ENCODE measurements at regions of chr15 and their contacts with region 1.

Region 1: GRCh38 chr15:56491110-56491722 is 26.3 kb upstream of the MNS1 start:
- DNase-seq: peak in 7 of 9 donors; percentile 24 to 49 (median 40)
- ATAC-seq: peak; percentile 74
- H3K4me3 ChIP-seq: no peak overlapping the region
- H3K4me3 Mint-ChIP-seq: no peak overlapping the region
- H3K27ac ChIP-seq: no peak overlapping the region
- H3K27ac Mint-ChIP-seq: no peak overlapping the region
- H3K4me1 ChIP-seq: no peaks in the 10 kb centered on the region
- H3K4me1 Mint-ChIP-seq: peaks cover 0 to 8% (median 0%) of the 10 kb centered on the region in 7 donors
- H3K27me3 ChIP-seq: no peaks in the 10 kb centered on the region
- H3K27me3 Mint-ChIP-seq: peaks cover 0 to 15% (median 6%) of the 10 kb centered on the region in 5 donors

Region 2: GRCh38 chr15:57146506-57147201 is 655.4 kb after region 1 on chr15:
- CTCF ChIA-PET with region 1: no interaction called
- POLR2A ChIA-PET with region 1: no interaction called
- intact Hi-C with region 1: loop called in 1 of 2 experiments (anchors 10 kb)
- DNase-seq: peak in 5 of 9 donors; percentile 14 to 35 (median 16)
- ATAC-seq: no peak
- H3K4me3 ChIP-seq: no peak overlapping the region
- H3K4me3 Mint-ChIP-seq: no peak overlapping the region
- H3K27ac ChIP-seq: no peak overlapping the region
- H3K27ac Mint-ChIP-seq: peak overlapping the region in 1 of 9 donors; percentile 14
- H3K4me1 ChIP-seq: no peaks in the 10 kb centered on the region
- H3K4me1 Mint-ChIP-seq: peaks cover 6 to 18% (median 12%) of the 10 kb centered on the region in 7 donors
- H3K27me3 ChIP-seq: no peaks in the 10 kb centered on the region
- H3K27me3 Mint-ChIP-seq: no peaks in the 10 kb centered on the region

Region 3: DNA sequence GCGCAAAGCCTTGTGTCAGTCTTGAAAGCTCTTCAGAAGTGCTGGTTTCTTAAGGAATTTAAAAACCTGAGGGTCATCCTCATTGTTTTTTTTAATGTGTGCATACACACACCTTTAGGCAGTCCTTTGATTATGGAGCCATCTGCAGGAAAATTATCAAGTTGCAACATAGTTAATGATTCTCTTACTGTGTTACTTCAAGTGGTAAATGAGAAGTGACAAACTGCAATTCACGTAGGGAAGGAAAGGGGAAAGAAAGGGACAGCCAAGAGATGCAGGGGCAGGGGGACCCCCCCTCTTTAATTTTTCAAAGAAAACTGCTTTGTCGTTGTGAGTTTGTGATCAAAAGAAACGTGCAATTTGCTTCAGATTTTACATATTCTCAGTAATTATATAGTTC is 722.6 kb after region 1 on chr15:
- CTCF ChIA-PET with region 1: interaction called, 4 read pairs
- POLR2A ChIA-PET with region 1: no interaction called
- intact Hi-C with region 1: loop called (anchors 1 to 5 kb)
- DNase-seq: peak in 5 of 9 donors; percentile 5 to 31 (median 14)
- ATAC-seq: peak; percentile 42
- H3K4me3 ChIP-seq: no peak overlapping the region
- H3K4me3 Mint-ChIP-seq: no peak overlapping the region
- H3K27ac ChIP-seq: no peak overlapping the region
- H3K27ac Mint-ChIP-seq: no peak overlapping the region
- H3K4me1 ChIP-seq: no peaks in the 10 kb centered on the region
- H3K4me1 Mint-ChIP-seq: peaks cover 2 to 59% (median 42%) of the 10 kb centered on the region in 7 donors
- H3K27me3 ChIP-seq: no peaks in the 10 kb centered on the region
- H3K27me3 Mint-ChIP-seq: no peaks in the 10 kb centered on the region

Region 4: GRCh38 chr15:57510647-57511046 is 1019.4 kb after region 1 on chr15:
- CTCF ChIA-PET with region 1: no interaction called
- POLR2A ChIA-PET with region 1: no interaction called
- intact Hi-C with region 1: no loop called
- DNase-seq: no peak
- ATAC-seq: no peak
- H3K4me3 ChIP-seq: no peak overlapping the region
- H3K4me3 Mint-ChIP-seq: no peak overlapping the region
- H3K27ac ChIP-seq: no peak overlapping the region
- H3K27ac Mint-ChIP-seq: no peak overlapping the region
- H3K4me1 ChIP-seq: no peaks in the 10 kb centered on the region
- H3K4me1 Mint-ChIP-seq: no peaks in the 10 kb centered on the region
- H3K27me3 ChIP-seq: no peaks in the 10 kb centered on the region
- H3K27me3 Mint-ChIP-seq: peaks cover 0 to 10% (median 0%) of the 10 kb centered on the region in 5 donors

Region 5: DNA sequence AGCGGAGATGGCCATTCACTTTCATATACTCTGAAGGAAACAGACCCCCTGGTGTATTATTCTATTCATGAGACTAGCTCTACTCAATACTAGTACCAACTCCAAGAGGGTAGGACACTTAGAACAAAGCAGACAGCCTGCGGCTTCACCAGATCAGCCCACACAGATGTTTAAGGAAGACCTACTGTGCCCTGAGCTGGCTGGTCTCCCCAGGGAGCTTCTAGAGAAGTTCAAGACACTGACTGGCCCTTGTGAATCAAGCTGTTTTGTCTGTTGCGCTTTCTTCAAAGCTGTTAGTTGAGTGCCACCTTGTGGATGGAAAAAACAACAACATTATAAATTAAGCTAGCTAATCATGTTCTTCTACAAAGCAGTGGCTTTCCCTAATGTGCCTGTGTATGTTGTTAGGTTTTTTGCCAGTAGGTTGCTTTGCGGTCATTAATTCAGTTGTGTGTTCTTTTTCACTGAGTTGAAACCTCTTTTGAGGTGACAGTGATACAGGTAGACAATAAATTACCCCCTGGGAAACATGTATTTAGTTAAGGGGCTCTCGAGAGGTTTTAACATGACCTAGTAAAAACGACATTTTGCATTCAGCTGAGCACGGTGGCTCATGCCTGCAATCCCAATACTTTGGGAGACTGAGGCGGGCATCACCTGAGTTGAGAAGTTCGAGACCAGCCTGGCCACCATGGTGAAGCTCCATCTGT is 1036.3 kb after region 1 on chr15:
- CTCF ChIA-PET with region 1: interaction called, 8 read pairs
- POLR2A ChIA-PET with region 1: no interaction called
- intact Hi-C with region 1: loop called (anchors 1 to 5 kb)
- DNase-seq: peak in 7 of 9 donors; percentile 20 to 52 (median 41)
- ATAC-seq: no peak
- H3K4me3 ChIP-seq: no peak overlapping the region
- H3K4me3 Mint-ChIP-seq: no peak overlapping the region
- H3K27ac ChIP-seq: no peak overlapping the region
- H3K27ac Mint-ChIP-seq: no peak overlapping the region
- H3K4me1 ChIP-seq: no peaks in the 10 kb centered on the region
- H3K4me1 Mint-ChIP-seq: no peaks in the 10 kb centered on the region
- H3K27me3 ChIP-seq: no peaks in the 10 kb centered on the region
- H3K27me3 Mint-ChIP-seq: peaks cover 4 to 24% (median 9%) of the 10 kb centered on the region in 5 donors

Measured in naive thymus-derived CD4-positive, alpha-beta T cell (primary cell).